ENCODE measurements at regions of chr16 and their contacts with region 1.

Region 1: DNA sequence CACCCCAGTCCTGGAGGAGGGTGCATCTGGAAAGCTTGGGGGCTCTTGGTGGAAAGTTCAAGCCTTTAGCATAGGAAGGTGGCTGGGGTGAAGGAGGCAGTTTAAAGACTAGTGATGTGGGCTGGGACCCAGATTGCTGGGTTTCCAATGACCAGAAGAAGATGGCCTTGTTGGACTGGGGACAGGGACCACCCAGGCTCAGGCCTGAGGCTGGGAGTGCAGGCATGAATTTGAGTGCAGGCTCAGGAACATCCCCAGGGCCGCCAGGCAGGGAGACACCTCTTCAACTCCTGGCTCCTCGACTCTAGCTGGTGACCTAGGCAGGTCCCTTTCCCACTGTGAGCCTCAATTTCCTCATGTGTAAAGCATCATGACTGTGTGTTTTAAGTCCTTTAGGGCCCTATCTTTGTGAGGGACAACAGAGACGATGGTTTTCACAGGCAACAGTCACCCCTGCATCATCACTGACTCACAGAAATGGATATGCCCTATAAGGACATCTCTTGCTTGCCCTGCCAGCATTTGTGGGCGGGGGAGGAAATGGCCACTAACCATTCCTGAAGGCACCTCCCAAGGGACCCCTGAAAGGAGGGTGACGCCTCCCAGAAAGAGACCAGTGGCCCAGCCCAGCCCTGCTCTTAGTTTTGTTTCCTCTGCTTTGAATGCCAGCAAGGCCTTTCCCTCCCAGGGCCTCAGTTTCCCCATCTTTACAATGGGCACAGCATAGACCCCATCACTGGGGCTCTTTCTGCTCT is 11.1 kb downstream of the NLRC5 start:
- DNase-seq: peak in 3 of 5 donors; percentile 39 to 74 (median 39)
- H3K4me3 ChIP-seq: peak overlapping the region; percentile 52
- H3K4me3 Mint-ChIP-seq: peak overlapping the region; percentile 74 to 87 (median 79)
- H3K27ac ChIP-seq: peak overlapping the region; percentile 71
- H3K27ac Mint-ChIP-seq: peak overlapping the region; percentile 90 to 99 (median 96)
- H3K4me1 ChIP-seq: peaks cover 94% of the 10 kb centered on the region
- H3K4me1 Mint-ChIP-seq: peaks cover 97 to 100% (median 99%) of the 10 kb centered on the region in 3 donors
- H3K27me3 ChIP-seq: no peaks in the 10 kb centered on the region
- H3K27me3 Mint-ChIP-seq: no peaks in the 10 kb centered on the region

Region 2: GRCh38 chr16:56950881-56951771 is 49.3 kb before region 1 on chr16:
- CTCF ChIA-PET with region 1: no interaction called
- POLR2A ChIA-PET with region 1: no interaction called
- DNase-seq: peak; percentile 17 to 65 (median 37)
- H3K4me3 ChIP-seq: no peak overlapping the region
- H3K4me3 Mint-ChIP-seq: peak overlapping the region in 1 of 7 donors; percentile 17
- H3K27ac ChIP-seq: no peak overlapping the region
- H3K27ac Mint-ChIP-seq: peak overlapping the region in 5 of 8 donors; percentile 5 to 71 (median 18)
- H3K4me1 ChIP-seq: no peaks in the 10 kb centered on the region
- H3K4me1 Mint-ChIP-seq: peaks cover 12 to 17% (median 12%) of the 10 kb centered on the region in 3 donors
- H3K27me3 ChIP-seq: no peaks in the 10 kb centered on the region
- H3K27me3 Mint-ChIP-seq: peaks cover 0 to 2% of the 10 kb centered on the region in 2 donors

Region 3: DNA sequence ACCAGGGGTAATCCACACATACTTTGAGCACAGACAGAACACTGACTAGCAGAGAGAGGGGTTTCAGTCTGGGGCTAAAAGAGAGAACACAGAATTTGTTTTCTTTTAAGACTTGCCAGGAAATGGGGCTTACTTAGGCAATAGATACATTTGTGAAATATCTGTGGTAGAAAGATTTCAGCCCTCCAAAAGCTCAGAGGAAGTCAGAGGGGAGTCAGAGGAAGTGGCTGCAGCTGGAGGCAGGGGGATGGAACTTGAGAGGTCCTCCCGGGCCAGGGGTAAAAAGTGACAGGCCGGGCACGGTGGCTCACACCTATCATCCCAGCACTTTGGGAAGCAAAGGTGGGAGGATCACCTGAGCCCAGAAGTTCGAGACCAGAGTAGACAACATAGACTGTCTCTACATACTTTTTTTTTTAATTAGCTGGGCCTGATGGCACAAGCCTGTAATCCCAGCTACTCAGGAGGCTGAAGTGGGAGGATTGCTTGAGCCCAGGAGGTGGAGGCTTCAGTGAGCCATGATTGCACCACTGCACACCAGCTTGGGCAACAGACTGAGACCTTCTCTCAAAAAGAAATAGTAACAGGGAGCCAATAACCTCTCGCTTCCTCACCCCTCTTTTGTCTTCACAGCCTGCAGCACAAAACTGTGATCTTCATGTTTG is 38.8 kb after region 1 on chr16:
- CTCF ChIA-PET with region 1: interaction called, 9 read pairs
- POLR2A ChIA-PET with region 1: interaction called, 10 read pairs
- DNase-seq: peak in 4 of 5 donors; percentile 24 to 67 (median 54)
- H3K4me3 ChIP-seq: no peak overlapping the region
- H3K4me3 Mint-ChIP-seq: peak overlapping the region; percentile 42 to 86 (median 71)
- H3K27ac ChIP-seq: no peak overlapping the region
- H3K27ac Mint-ChIP-seq: peak overlapping the region; percentile 81 to 99 (median 91)
- H3K4me1 ChIP-seq: peaks cover 96% of the 10 kb centered on the region
- H3K4me1 Mint-ChIP-seq: peaks cover 88 to 99% (median 95%) of the 10 kb centered on the region in 3 donors
- H3K27me3 ChIP-seq: no peaks in the 10 kb centered on the region
- H3K27me3 Mint-ChIP-seq: peaks cover 0 to 1% of the 10 kb centered on the region in 2 donors